ENCODE measurements at regions of chr22 and their contacts with region 1.

Region 1: GRCh38 chr22:28009272-28009827 is 90.3 kb upstream of the PITPNB start:
- DNase-seq: peak; percentile 87
- H3K4me3 ChIP-seq: no peak overlapping the region
- H3K27ac ChIP-seq: peak overlapping the region; percentile 38 to 71 (median 56)
- H3K4me1 ChIP-seq: peaks cover 0 to 39% (median 29%) of the 10 kb centered on the region in 4 donors
- H3K27me3 ChIP-seq: no peaks in the 10 kb centered on the region
- CTCF ChIP-seq: peak; percentile 91 to 97 (median 93)
- EP300 ChIP-seq: no peak
- POLR2A ChIP-seq: no peak

Region 2: DNA sequence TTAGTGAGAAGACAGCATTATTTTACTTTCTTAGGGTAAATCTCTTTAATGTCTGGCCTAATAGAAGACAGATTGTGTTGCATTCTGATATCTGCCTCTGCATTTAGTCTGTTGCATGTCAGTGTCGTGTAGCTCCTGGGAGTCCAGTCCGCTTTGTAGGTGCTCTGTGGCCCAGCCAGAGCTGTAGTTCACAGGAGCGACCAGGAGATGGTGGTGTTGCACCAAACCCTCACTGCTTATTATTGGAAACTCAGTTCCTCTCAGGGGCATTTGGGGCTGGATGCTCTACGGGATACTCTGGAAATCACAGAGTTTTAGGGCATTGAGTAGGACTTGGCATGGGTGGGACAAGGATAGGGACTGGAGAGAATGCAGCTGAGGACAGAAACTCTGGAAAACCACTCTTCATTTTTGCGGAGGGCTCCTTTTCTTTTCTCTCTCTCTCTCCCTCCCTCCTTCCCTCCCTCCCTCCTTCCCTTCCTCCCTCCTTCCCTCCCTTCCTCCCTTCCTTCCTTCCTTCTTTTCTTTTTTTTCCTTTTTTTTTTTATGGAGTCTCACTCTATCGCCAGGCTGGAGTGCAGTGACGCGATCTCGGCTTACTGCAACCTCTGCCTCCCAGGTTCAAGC is 1330.2 kb before region 1 on chr22:
- intact Hi-C with region 1: loop called (anchors 5 kb)
- DNase-seq: peak; percentile 81
- H3K4me3 ChIP-seq: no peak overlapping the region
- H3K27ac ChIP-seq: no peak overlapping the region
- H3K4me1 ChIP-seq: peaks cover 0 to 18% (median 12%) of the 10 kb centered on the region in 4 donors
- H3K27me3 ChIP-seq: no peaks in the 10 kb centered on the region
- CTCF ChIP-seq: peak; percentile 49 to 88 (median 87)
- EP300 ChIP-seq: no peak
- POLR2A ChIP-seq: no peak

Region 3: DNA sequence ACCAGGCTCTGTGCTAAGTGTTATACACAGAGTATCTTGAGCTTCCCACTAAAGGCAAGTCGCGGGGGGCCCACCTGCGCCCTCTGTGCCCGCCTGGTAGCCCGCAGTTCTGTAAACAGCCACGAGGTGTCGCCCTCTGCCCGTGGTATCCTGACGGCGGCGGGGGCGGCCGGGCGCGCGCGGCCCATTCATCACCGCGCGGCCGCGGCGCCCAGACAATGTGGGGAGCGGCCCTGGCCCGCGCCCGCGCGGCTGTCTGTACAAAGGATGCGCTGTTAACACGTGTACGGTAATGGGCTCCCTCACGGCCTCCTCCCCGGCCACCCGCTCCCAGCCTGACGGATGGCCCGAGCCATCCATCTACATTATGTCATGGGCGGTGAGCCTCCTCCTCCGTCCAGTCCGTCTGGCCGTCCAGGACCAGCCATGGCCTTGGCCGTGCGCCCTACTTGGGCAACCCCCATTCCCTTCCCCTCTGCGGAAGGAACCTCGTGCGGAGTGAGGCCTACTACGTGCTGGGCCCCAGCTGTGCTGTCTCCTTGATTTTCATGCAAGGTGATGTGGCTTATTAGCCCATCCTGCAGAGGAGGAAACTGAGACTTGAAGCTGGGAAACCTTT is 1252.6 kb before region 1 on chr22:
- intact Hi-C with region 1: loop called (anchors 5 kb)
- DNase-seq: peak; percentile 77
- H3K4me3 ChIP-seq: peak overlapping the region in 3 of 4 donors; percentile 18 to 34 (median 30)
- H3K27ac ChIP-seq: no peak overlapping the region
- H3K4me1 ChIP-seq: peaks cover 0 to 9% (median 0%) of the 10 kb centered on the region in 4 donors
- H3K27me3 ChIP-seq: no peaks in the 10 kb centered on the region
- CTCF ChIP-seq: peak; percentile 58 to 93 (median 70)
- EP300 ChIP-seq: no peak
- POLR2A ChIP-seq: no peak

Region 4: GRCh38 chr22:27880778-27881394 is 128.5 kb before region 1 on chr22:
- intact Hi-C with region 1: loop called (anchors 1 kb)
- DNase-seq: no peak
- H3K4me3 ChIP-seq: no peak overlapping the region
- H3K27ac ChIP-seq: peak overlapping the region; percentile 82 to 87 (median 84)
- H3K4me1 ChIP-seq: peaks cover 0 to 99% (median 90%) of the 10 kb centered on the region in 4 donors
- H3K27me3 ChIP-seq: no peaks in the 10 kb centered on the region
- CTCF ChIP-seq: peak; percentile 74 to 86 (median 80)
- EP300 ChIP-seq: no peak
- POLR2A ChIP-seq: no peak

Region 5: DNA sequence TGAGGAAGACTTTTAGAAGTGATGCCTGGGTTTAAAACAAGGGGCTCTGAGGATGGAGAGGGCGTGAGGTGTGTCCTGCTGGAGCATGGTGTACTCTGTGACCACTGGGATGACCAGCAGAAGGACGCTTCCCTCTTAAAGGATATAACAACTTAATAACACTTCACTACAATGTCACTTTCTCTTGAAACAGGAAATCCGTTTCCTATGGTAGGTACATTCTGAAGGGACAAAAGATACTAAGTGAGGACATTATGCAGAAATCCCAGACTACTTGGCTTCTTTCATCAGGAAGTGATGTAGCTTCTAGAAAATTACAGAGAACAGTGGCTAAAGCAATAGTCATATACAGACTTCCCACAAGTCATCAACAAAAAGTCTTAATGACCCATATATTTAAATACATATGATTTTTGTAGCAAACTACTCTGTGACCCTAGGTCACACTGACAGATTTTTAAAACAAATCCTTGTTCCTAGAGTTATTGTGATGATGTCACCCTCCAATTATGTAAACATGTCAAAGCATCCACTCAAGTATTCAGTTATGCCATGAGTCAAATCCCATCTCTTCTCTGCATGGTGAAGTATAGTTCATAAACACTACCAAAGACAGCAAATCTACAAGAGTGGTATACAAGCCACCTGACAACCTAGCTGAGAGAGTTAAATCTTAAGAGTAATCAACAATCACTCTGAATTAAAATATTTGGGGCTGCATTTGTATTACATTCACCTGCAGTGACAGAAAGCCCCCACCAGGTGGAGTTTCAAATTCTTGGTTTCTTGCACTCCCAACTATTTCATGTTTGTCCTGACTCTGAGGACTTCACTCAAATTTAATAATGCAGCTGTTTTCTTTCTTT is 123.1 kb before region 1 on chr22:
- intact Hi-C with region 1: loop called (anchors 1 kb)
- DNase-seq: no peak
- H3K4me3 ChIP-seq: no peak overlapping the region
- H3K27ac ChIP-seq: peak overlapping the region; percentile 82 to 87 (median 84)
- H3K4me1 ChIP-seq: peaks cover 0 to 67% (median 63%) of the 10 kb centered on the region in 4 donors
- H3K27me3 ChIP-seq: no peaks in the 10 kb centered on the region
- CTCF ChIP-seq: peak; percentile 78 to 91 (median 82)
- EP300 ChIP-seq: peak in 1 of 4 donors; percentile 12
- POLR2A ChIP-seq: no peak

Measured in sigmoid colon (tissue), 7 donors.